Esophagus muscularis mucosa (tissue), 4 donors: ENCODE measurements at regions of chr17 and their contacts with region 1.

Region 1: GRCh38 chr17:7136266-7136877 is 21.8 kb upstream of the ASGR2 start:
- DNase-seq: no peak
- H3K4me3 ChIP-seq: no peak overlapping the region
- H3K27ac ChIP-seq: no peak overlapping the region
- H3K4me1 ChIP-seq: peaks cover 2 to 18% (median 8%) of the 10 kb centered on the region in 4 donors
- H3K27me3 ChIP-seq: peaks cover 0 to 86% (median 13%) of the 10 kb centered on the region in 4 donors
- CTCF ChIP-seq: peak; percentile 94 to 96 (median 94)
- EP300 ChIP-seq: no peak
- POLR2A ChIP-seq: no peak

Region 2: DNA sequence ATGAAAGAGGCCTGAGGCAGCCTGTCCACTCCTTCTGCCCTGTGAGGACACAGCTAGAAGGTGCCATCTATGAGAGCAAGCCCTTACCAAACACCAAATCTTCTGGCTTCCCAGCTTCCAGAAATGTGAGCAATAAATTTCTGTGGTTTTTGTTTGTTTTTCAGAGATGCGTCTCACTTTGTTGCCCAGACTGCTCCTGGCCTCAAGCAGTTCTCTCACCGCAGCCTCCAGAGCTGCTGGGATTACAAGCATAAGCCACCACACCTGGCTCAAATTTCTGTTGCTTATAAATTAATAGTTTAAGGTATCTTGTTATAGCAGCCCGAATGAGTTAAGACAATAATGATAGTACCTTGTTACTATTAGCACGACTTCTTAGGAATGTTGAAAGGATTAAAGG is 80.0 kb before region 1 on chr17:
- intact Hi-C with region 1: loop called (anchors 1 kb)
- DNase-seq: no peak
- H3K4me3 ChIP-seq: no peak overlapping the region
- H3K27ac ChIP-seq: no peak overlapping the region
- H3K4me1 ChIP-seq: peaks cover 0 to 4% (median 0%) of the 10 kb centered on the region in 4 donors
- H3K27me3 ChIP-seq: peaks cover 0 to 10% (median 0%) of the 10 kb centered on the region in 4 donors
- CTCF ChIP-seq: no peak
- EP300 ChIP-seq: no peak
- POLR2A ChIP-seq: no peak

Region 3: DNA sequence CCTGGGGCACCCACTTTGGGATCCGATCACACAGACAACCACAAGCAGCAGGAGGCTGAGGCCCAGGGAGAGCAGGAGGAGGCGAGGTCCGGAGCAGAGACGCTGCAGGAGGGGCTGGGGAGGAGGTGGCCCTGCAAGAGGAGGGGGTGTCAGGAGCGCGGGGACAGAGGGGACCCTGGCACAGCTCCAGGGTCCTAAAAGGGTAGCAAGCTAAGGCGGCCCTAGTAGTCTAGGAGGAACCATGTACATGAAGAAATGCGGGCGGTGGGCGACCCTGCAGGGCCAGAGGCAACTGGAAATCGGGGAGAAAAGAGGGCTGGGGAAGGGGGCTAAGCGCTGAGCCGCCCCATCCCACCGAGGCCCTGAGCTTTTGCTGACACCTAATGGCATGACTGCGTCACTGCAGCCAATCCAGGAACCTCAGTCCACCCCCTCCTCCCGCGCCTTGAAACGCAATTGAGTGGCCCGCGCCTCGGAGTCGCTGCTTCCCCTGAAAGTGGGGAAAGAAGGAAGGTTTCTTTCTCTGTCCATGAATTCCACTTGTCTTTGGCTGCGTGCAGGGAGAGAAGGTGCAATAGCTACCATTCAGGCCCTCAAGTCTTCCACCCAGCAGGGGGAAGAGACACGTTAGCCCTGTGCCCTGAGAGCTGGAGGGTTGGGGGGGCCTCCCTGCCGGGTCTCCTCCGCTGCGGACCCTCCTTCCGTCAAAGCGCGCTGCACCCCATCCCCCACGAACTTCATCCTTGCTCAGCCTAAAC is 41.0 kb after region 1 on chr17:
- intact Hi-C with region 1: loop called (anchors 5 kb)
- DNase-seq: no peak
- H3K4me3 ChIP-seq: peak overlapping the region; percentile 35 to 55 (median 43)
- H3K27ac ChIP-seq: no peak overlapping the region
- H3K4me1 ChIP-seq: peaks cover 12 to 25% (median 23%) of the 10 kb centered on the region in 4 donors
- H3K27me3 ChIP-seq: peaks cover 0 to 66% (median 18%) of the 10 kb centered on the region in 4 donors
- CTCF ChIP-seq: peak; percentile 76 to 95 (median 83)
- EP300 ChIP-seq: no peak
- POLR2A ChIP-seq: no peak